ENCODE measurements at regions of chr4 and their contacts with region 1.

Region 1: DNA sequence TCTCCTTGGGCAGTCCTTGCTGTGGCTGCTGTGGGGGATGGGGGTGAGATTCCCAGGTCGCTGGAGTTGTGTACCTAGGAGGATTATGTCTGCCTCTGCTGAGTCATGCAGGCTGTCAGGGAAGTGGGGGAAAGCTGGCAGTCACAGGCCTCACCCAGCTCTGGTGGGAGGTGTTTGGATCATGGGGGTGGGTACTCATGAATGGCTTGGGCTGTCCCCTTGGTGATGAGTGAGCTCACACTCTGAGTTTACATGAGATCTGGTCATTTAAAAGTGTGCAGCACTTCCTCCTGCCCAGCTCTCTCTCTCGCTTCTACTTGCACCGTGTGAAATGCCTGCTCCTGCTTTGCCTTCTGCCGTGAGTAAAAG is 24.6 kb upstream of the PDLIM3 start:
- DNase-seq: no peak

Region 2: DNA sequence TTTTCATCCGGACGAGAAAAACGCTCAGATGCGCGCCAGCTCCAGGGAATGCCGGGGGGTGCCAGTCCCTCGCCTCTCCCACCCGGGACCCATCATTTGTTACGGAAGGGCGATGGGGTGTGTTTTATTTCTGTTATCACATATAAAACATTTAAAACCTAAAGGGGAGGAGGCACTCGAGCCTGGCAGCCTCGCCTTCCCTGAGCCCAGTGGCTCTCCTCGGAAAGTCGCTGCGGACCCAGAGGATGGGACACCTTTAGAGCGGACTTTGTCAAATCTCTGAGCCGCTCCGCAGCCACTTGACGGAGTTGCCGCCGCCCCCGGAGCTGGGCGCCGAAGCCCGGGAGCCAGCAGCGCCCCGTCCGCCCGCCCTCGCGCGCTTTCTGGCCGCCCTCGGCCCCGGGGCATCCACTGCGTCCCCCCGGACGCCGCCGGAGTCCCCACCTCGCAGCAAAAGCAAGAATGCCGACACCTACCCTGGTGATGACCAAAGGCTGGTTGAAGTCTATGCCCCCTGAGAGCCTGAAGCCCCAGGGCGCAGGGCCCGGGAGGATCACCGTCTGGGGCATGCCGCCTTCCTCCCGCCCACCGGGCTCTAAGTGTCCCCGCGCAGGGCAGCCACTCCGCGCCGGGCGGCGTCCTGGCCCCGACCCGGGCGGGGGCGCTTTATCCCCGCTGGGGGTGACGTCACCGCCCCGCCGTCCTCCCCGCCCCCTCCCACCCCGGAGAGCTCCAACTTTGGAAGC is 24.9 kb before region 1 on chr4 and contains the start of gene PDLIM3:
- CTCF ChIA-PET with region 1: interaction called, 6 read pairs
- POLR2A ChIA-PET with region 1: interaction called, 10 read pairs
- DNase-seq: peak; percentile 76

Region 3: GRCh38 chr4:185573651-185574199 is 13.8 kb after region 1 on chr4:
- CTCF ChIA-PET with region 1: interaction called, 4 read pairs
- POLR2A ChIA-PET with region 1: interaction called, 11 read pairs
- DNase-seq: peak; percentile 61

Region 4: GRCh38 chr4:185597532-185598188 is 37.8 kb after region 1 on chr4:
- CTCF ChIA-PET with region 1: interaction called, 11 read pairs
- POLR2A ChIA-PET with region 1: interaction called, 3 read pairs
- DNase-seq: peak; percentile 60

Measured in HEK293T (cell line).